CD8-positive, alpha-beta memory T cell (primary cell): ENCODE measurements at regions of chr22 and their contacts with region 1.

Region 1: DNA sequence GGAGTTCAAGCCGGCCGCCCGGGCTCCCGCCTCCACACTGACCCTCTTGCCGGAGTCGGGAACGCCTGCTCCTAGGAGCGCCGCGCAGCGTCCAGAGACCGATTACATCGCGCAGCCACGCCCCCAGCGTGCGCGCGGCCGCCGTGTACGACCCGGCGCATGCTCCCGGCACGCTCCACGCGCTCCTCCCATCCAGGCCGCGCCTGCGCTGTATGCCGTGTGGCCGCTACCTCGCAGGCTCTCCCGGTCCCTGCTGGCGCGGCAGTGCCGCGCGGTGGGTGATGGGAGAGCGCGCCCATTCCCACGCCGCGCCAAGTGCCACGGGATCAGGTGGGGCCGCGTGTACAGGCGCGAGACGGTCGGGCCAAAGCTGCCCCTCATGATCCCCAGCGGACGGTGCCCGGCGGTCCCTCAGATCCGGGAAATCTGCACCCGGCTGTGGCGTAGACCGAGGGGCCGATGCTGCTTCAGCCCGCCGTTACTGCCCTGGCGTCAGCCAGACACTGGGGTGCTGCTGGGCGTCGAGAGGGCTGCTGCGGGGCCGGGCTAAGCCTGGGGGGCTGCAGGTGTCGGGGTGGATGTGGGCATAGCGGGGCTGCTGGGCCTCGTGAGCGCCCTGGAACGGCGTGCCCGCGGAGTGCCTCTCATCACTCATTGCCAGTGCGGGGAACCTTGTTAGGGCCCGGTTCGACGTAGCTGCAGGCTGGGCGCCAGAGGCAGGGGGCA is at the starts of genes GNB1L and RTL10:
- DNase-seq: peak; percentile 94 to 96 (median 95)
- H3K4me3 ChIP-seq: peak within 1 kb of the TSS; percentile 90
- H3K4me3 Mint-ChIP-seq: peak within 1 kb of the TSS; percentile 91 to 99 (median 94)
- H3K27ac ChIP-seq: peak within 1 kb of the TSS; percentile 97
- H3K27ac Mint-ChIP-seq: peak within 1 kb of the TSS; percentile 94 to 98 (median 96)
- H3K4me1 ChIP-seq: peaks cover 27% of the 10 kb centered on the region
- H3K4me1 Mint-ChIP-seq: peaks cover 29 to 55% (median 42%) of the 10 kb centered on the region in 3 donors
- H3K27me3 ChIP-seq: no peaks in the 10 kb centered on the region
- H3K27me3 Mint-ChIP-seq: no peaks in the 10 kb centered on the region
- total RNA-seq, gene GNB1L: 16.6 to 17.9 TPM
- total RNA-seq, gene RTL10: 18.1 to 23.2 TPM

Region 2: DNA sequence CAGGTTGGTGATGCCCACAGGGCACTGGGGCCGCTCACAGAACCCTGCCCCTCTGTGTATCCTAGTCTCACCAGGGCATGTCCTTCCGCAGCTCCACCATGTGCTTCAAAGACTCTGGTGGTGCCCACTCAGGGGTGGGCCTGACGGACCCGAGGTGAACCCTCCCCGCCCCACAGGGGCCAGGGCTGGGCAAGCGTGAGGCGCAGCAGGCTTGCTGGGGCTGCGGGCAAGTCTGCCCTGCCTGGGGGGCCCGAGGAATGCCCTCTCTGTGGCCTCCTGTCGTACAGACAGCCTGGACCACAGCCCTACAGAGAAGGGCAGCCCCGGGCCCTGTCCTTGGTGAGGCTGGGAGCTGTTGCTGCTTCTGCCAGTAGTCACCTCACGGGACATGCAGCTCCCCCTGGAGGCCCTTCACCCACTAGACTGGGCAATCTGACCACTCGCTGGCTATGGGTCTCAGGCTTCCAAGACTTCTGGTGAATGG is 54.1 kb before region 1 on chr22:
- CTCF ChIA-PET with region 1: no interaction called
- POLR2A ChIA-PET with region 1: no interaction called
- DNase-seq: no peak
- H3K4me3 ChIP-seq: no peak overlapping the region
- H3K4me3 Mint-ChIP-seq: no peak overlapping the region
- H3K27ac ChIP-seq: no peak overlapping the region
- H3K27ac Mint-ChIP-seq: no peak overlapping the region
- H3K4me1 ChIP-seq: no peaks in the 10 kb centered on the region
- H3K4me1 Mint-ChIP-seq: no peaks in the 10 kb centered on the region
- H3K27me3 ChIP-seq: no peaks in the 10 kb centered on the region
- H3K27me3 Mint-ChIP-seq: no peaks in the 10 kb centered on the region

Region 3: DNA sequence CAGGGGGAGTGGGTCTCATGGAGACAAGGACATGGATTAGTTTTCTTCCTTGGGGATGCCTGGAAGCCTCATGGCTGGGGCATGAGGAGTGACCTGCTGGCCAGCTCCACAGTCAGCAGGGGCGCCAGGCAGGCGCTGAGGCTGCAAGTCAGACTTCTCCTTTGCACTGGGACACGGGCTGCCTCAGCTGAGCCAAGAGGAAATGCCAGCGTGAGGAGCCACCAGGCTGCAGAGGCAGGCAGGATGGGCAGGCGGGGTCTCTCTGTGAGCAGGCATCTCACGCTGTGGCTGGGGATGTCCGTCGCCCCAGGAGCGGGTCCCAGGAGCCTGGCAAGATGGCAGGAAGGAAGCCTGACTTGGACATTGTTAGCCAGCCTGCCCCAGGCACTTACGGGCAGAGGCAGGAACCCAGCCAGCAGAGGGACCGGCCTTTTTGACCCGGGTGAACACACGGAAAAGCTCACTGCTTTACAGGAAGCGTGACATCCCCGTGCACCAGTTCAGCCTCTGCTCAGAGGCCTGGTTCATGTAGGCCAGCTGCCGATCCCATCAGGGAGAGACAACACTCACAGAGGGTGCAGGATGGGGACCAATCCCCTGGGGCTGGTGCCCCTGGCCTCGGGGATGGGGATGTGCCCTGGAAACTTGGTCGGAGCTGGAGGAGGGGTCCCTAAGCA is 10.4 kb before region 1 on chr22:
- CTCF ChIA-PET with region 1: no interaction called
- POLR2A ChIA-PET with region 1: no interaction called
- DNase-seq: peak in 1 of 5 donors; percentile 41
- H3K4me3 ChIP-seq: no peak overlapping the region
- H3K4me3 Mint-ChIP-seq: peak overlapping the region in 3 of 7 donors; percentile 50 to 81 (median 58)
- H3K27ac ChIP-seq: no peak overlapping the region
- H3K27ac Mint-ChIP-seq: peak overlapping the region in 5 of 8 donors; percentile 55 to 90 (median 63)
- H3K4me1 ChIP-seq: peaks cover 24% of the 10 kb centered on the region
- H3K4me1 Mint-ChIP-seq: peaks cover 8 to 39% (median 9%) of the 10 kb centered on the region in 3 donors
- H3K27me3 ChIP-seq: no peaks in the 10 kb centered on the region
- H3K27me3 Mint-ChIP-seq: no peaks in the 10 kb centered on the region

Region 4: GRCh38 chr22:19891317-19892256 is 36.6 kb after region 1 on chr22:
- CTCF ChIA-PET with region 1: interaction called, 10 read pairs
- POLR2A ChIA-PET with region 1: interaction called, 25 read pairs
- DNase-seq: peak; percentile 45 to 88 (median 72)
- H3K4me3 ChIP-seq: peak overlapping the region; percentile 71
- H3K4me3 Mint-ChIP-seq: peak overlapping the region; percentile 77 to 91 (median 83)
- H3K27ac ChIP-seq: peak overlapping the region; percentile 63
- H3K27ac Mint-ChIP-seq: peak overlapping the region; percentile 88 to 99 (median 96)
- H3K4me1 ChIP-seq: peaks cover 88% of the 10 kb centered on the region
- H3K4me1 Mint-ChIP-seq: peaks cover 39 to 53% (median 51%) of the 10 kb centered on the region in 3 donors
- H3K27me3 ChIP-seq: no peaks in the 10 kb centered on the region
- H3K27me3 Mint-ChIP-seq: no peaks in the 10 kb centered on the region